Activated CD4-positive, alpha-beta memory T cell treated with anti-CD3 and anti-CD28 coated beads, Interleukin-2, amount 10 ng/mL, durations not matched to agents 7 days and 5 days (primary cell): ENCODE measurements at regions of chr1 and their contacts with region 1.

Region 1: GRCh38 chr1:160675641-160676410 is 29.0 kb upstream of the SLAMF1 start:
- DNase-seq: peak; percentile 82
- H3K4me3 Mint-ChIP-seq: peak overlapping the region; percentile 53
- H3K27ac Mint-ChIP-seq: peak overlapping the region; percentile 61
- H3K4me1 Mint-ChIP-seq: peaks cover 33% of the 10 kb centered on the region
- H3K27me3 Mint-ChIP-seq: no peaks in the 10 kb centered on the region

Region 2: DNA sequence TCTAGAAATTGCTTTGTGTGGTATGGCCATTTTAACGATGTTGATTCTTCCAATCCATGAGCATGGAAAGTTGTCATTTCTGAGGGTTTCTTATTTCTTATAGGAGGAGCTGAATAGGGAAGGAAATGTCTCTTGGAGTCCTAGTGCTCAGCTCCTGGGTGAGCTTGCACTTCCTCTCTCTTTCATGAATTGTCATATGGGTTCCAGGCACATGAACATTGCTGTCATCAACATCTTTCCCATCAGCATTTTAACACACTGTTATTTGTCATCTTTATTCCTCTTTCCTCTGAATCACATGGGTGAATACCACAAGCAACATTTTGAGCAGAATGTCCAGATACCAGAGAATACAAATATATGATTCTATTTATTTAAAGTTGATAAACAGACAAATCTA is 176.2 kb before region 1 on chr1:
- CTCF ChIA-PET with region 1: no interaction called
- POLR2A ChIA-PET with region 1: no interaction called
- DNase-seq: no peak
- H3K4me3 Mint-ChIP-seq: no peak overlapping the region
- H3K27ac Mint-ChIP-seq: no peak overlapping the region
- H3K4me1 Mint-ChIP-seq: peaks cover 5% of the 10 kb centered on the region
- H3K27me3 Mint-ChIP-seq: no peaks in the 10 kb centered on the region

Region 3: GRCh38 chr1:160519642-160520435 is 156.0 kb before region 1 on chr1:
- CTCF ChIA-PET with region 1: no interaction called
- POLR2A ChIA-PET with region 1: no interaction called
- DNase-seq: no peak
- H3K4me3 Mint-ChIP-seq: peak overlapping the region; percentile 84
- H3K27ac Mint-ChIP-seq: peak overlapping the region; percentile 93
- H3K4me1 Mint-ChIP-seq: peaks cover 87% of the 10 kb centered on the region
- H3K27me3 Mint-ChIP-seq: no peaks in the 10 kb centered on the region

Region 4: GRCh38 chr1:160590488-160590887 is 85.3 kb before region 1 on chr1:
- CTCF ChIA-PET with region 1: no interaction called
- POLR2A ChIA-PET with region 1: no interaction called
- DNase-seq: no peak
- H3K4me3 Mint-ChIP-seq: no peak overlapping the region
- H3K27ac Mint-ChIP-seq: no peak overlapping the region
- H3K4me1 Mint-ChIP-seq: peaks cover 4% of the 10 kb centered on the region
- H3K27me3 Mint-ChIP-seq: no peaks in the 10 kb centered on the region

Region 5: GRCh38 chr1:160607011-160607671 is 68.7 kb before region 1 on chr1:
- CTCF ChIA-PET with region 1: interaction called, 5 read pairs
- POLR2A ChIA-PET with region 1: interaction called, 10 read pairs
- DNase-seq: peak; percentile 70
- H3K4me3 Mint-ChIP-seq: no peak overlapping the region
- H3K27ac Mint-ChIP-seq: peak overlapping the region; percentile 58
- H3K4me1 Mint-ChIP-seq: peaks cover 59% of the 10 kb centered on the region
- H3K27me3 Mint-ChIP-seq: no peaks in the 10 kb centered on the region

Region 6: DNA sequence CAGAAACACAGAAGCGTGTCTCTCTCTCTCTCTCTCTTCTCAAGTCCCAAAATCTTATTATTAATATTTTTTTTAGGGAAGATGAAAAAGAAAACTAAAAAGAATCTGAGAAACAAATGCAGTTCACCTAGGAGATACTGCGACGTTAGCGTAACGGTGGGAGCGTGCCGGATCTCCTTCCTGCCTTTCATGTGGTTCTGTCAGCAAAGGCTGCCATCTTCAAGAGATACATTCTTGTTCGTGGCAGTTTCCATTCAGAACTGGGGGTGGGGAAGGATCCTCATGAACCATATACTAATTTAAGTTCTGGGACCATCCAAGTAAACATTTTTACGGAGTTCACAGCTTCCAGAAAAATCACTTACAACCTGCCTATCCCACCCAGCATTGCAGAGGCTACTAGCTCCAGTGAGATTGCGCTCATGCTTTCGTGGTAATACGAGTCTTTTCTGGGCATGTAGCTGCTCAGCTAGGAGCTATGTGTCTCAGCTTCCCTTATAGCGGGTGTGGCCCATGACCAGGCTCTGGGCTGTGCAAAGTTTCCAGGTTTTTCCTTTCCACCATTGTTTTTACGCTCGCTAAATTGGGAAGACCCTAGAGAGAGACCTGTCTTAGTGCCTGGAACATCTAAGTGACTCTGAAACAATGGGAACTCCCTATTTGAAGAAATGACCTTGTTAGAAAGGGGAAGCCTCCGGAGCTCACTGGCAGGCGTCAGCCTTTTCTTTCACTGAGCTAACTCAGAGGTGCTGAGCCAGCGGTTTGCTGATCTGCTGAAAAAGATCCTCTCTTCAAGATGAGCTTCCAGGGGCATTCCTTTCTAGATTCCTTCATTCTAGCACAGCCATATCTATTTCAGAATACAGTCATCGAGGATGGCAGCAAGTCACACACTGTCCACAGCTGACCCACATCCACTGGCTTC is 46.3 kb before region 1 on chr1:
- CTCF ChIA-PET with region 1: interaction called, 14 read pairs
- POLR2A ChIA-PET with region 1: interaction called, 41 read pairs
- DNase-seq: peak; percentile 81
- H3K4me3 Mint-ChIP-seq: peak overlapping the region; percentile 62
- H3K27ac Mint-ChIP-seq: peak overlapping the region; percentile 99
- H3K4me1 Mint-ChIP-seq: peaks cover 96% of the 10 kb centered on the region
- H3K27me3 Mint-ChIP-seq: no peaks in the 10 kb centered on the region

Region 7: DNA sequence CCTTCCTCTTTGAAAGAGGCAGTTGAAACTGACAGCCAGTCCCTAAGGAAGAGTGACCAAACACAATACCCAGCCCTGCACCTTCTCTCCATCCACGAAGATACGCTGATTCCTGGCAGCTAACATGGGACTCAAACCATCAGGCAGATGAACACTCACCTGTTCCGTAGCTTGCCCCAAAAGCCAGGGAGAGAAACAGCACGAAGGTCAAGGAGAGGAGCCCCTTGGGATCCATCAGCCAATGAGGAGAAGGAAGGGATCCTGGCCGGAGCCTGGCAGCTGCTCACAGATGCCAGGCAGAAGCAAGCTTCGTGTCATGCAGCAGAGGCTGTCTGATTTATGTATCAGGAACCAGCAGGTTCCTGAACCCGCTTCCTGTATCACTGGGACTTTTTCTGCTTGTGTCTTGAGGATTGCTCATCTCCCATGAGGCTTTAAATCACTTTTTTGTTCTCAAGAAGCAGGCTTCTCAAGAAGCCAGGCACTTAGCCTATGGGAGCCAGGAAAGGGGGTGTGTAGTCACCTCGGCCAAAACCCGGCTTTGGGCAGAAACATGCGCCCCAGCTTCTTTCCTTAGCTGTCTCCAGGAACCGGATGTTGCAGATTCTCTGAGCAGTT is 29.0 kb before region 1 on chr1 and contains the start of gene SLAMF1:
- CTCF ChIA-PET with region 1: interaction called, 46 read pairs
- POLR2A ChIA-PET with region 1: interaction called, 70 read pairs
- DNase-seq: peak; percentile 49
- H3K4me3 Mint-ChIP-seq: peak within 1 kb of the TSS; percentile 88
- H3K27ac Mint-ChIP-seq: peak within 1 kb of the TSS; percentile 89
- H3K4me1 Mint-ChIP-seq: peaks cover 53% of the 10 kb centered on the region
- H3K27me3 Mint-ChIP-seq: no peaks in the 10 kb centered on the region
- total RNA-seq, gene SLAMF1: 106 to 113 TPM

Region 8: DNA sequence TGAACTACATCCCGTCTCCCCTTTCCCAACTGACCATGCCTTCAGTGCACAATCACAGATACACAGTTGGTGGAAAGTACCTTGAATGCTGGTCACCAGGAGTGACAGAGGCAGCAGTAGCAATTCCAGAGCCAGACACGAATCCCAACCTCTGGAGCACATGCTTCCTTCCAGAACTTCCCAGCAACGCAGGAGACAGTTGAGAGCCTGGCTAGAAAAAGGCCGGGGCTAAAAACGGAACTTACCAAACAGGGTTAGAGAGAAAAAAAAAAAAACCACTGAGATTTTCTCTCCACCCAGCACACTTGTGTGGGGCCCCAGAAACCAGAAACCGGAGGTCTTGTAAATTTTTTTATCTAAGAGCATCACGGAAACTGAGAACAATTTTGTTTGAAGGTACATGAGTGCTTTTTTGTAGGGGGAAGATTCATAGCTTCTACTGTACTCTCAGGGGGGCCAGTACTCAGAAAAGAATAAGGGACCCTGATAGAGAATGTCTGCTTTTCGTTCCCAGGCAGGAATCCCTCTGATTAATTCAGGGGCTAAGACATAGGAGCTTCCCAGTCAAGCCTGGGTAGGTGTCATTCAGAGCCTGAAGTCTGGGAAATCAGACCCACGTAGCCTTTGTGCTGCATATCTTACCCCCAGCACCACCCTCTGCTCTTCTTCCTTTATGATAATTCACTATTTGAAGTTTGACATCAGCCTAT is 35.9 kb after region 1 on chr1 and contains the start of gene CD48:
- CTCF ChIA-PET with region 1: interaction called, 63 read pairs
- POLR2A ChIA-PET with region 1: interaction called, 106 read pairs
- DNase-seq: peak; percentile 61
- H3K4me3 Mint-ChIP-seq: no peak within 1 kb of the TSS
- H3K27ac Mint-ChIP-seq: no peak within 1 kb of the TSS
- H3K4me1 Mint-ChIP-seq: peaks cover 20% of the 10 kb centered on the region
- H3K27me3 Mint-ChIP-seq: no peaks in the 10 kb centered on the region
- total RNA-seq, gene CD48: 403 to 404 TPM